ENCODE measurements at regions of chr11 and their contacts with region 1.

Region 1: DNA sequence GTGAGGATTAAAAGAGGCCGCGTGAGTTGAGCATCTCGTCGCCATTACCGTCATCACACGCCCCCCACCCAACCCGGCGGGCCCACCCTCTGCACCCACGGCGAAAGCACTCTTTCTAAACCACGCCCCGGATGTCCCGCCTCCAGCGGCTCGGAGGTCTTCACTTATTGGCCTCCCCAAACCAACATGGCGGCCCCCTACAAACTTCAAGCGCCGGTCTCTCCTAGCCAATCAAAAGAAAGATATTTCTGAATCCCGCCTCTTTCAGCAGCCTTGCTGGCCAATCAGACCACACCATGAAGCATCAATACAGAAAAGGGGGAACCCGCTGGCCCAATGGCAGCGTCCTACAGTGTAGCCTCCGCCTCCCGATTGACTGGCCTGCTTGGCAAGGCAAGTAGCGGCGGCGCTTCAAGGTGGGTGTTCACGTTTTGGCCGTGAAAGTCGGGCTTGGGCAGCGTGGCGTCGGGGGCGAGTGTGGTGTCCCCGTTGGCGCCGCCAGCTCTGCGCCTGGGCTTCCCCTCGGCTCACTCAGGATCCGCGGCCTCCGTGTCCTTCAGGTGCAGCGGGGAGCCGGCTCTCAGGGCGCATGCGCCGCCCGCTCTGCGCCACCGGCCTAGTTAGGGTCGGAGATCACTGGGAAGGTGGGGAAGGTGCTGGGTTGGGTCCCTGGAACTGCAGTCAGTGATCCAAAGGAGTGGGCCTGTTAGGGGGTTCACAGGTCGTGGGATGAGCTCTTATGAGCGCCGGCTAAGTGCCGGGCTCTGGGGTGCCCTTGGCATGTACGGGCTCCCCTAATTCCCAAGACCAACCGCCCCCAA is at the start of gene NDUFS8:
- DNase-seq: peak; percentile 99
- H3K4me3 Mint-ChIP-seq: peak within 1 kb of the TSS; percentile 84
- H3K27ac Mint-ChIP-seq: peak within 1 kb of the TSS; percentile 87
- H3K4me1 Mint-ChIP-seq: peaks cover 23% of the 10 kb centered on the region
- H3K27me3 Mint-ChIP-seq: no peaks in the 10 kb centered on the region
- total RNA-seq, gene NDUFS8: 153 and 159 TPM in 2 replicates

Region 2: DNA sequence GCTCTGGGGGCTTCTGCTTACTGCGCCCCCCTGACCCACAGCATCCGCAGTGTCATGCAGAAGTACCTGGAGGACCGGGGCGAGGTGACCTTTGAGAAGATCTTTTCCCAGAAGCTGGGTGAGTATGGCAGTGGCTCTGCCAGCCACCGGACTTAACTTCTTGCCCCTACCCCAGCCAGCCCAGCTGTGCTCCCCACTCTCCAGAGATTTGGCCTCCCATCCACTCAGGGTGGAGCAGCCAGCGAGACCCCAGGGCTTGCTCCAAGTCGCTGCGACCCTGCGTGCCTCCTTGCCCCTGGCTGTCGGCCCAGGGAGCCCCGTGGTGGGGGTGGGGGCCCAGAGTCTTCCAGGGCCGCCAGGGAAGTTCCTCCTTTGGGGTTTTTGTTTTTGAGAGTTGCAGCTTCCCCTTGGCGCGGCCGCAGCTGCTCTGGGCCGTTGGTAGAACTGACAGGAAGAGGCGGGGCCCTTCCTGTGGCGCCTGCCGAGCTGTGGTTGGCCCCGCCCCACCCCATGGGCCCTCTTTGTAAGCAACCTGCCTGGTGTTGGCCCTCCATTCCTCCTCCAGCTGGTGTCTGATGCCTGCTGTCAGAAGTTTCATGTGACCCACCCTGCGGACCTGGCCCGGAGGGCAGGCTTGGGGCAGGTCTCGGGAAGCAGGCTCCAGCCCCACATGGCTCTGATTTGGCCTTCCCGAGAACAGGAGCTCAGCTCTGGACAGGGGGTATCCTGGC is 753.1 kb before region 1 on chr11:
- intact Hi-C with region 1: loop called (anchors 10 kb)
- DNase-seq: peak; percentile 97
- H3K4me3 Mint-ChIP-seq: peak overlapping the region; percentile 81
- H3K27ac Mint-ChIP-seq: peak overlapping the region; percentile 99
- H3K4me1 Mint-ChIP-seq: peaks cover 52% of the 10 kb centered on the region
- H3K27me3 Mint-ChIP-seq: no peaks in the 10 kb centered on the region

Region 3: DNA sequence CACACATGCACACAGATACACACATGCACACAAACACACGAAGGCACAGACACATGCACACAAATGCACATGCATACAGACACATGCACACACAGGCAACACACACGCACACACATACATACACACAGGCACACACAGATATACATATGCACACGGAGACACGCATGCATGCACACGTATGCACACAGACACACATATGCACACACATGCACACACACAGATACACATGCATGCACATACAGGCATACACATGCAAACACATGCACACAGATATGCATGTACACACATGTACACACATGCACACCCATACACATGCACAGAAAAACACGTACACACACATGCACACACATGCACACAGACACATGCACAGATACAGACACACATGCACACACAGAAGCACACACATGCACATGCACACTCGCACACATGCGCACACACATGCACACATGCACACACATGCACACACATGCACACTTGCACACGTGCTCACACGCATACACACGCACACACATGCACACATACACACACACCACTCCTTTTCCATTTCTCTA is 285.3 kb before region 1 on chr11:
- intact Hi-C with region 1: no loop called
- DNase-seq: no peak
- H3K4me3 Mint-ChIP-seq: no peak overlapping the region
- H3K27ac Mint-ChIP-seq: no peak overlapping the region
- H3K4me1 Mint-ChIP-seq: no peaks in the 10 kb centered on the region
- H3K27me3 Mint-ChIP-seq: peaks cover 2% of the 10 kb centered on the region

Region 4: GRCh38 chr11:68003846-68004550 is 26.5 kb before region 1 on chr11 and contains the start of gene UNC93B1:
- intact Hi-C with region 1: loop called (anchors 1 kb)
- DNase-seq: peak; percentile 96
- H3K4me3 Mint-ChIP-seq: peak within 1 kb of the TSS; percentile 89
- H3K27ac Mint-ChIP-seq: peak within 1 kb of the TSS; percentile 87
- H3K4me1 Mint-ChIP-seq: peaks cover 19% of the 10 kb centered on the region
- H3K27me3 Mint-ChIP-seq: peaks cover 2% of the 10 kb centered on the region
- total RNA-seq, gene UNC93B1: 13.8 and 15.6 TPM in 2 replicates

Region 5: DNA sequence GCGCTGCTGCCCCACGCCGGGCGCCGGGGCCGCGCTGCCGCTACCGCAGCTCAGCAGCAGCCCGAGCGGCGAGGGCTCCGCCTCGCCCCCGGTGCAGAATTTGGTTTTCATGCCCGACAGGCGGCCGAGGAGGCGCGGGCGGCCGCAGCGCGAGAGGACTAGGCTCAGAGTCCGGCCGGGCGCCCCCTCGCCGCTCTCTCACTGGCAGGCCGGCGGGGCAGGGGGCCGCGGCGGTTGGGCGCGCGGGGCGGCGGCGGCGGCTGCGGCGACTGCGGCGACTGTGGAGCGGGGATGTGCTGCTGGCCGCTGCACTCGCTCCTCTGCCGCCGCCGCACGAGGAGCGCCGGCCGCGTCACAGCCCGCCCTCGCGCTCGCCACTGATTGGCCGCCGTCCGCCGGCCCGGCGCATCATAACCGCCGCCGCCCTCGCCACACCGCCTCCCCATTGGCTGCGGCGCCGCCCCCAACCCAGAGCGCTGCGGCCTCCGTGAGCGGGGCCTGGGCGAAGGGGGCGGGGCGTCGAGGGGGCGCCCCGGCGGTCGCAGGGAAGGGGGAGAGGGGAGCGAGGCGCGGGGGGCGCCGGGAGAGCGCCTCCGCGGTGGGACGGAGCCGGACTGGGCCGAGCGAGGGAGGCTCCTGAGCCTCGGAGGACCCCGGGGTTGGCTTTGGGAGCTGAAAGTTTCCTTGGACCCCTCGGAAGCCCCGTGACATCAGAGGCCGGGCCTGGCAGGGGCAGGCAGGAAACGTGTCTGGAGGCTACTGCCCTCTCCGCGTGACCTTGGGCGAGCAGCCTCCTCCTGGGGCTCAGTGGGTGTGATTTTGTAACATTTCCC is 90.8 kb after region 1 on chr11 and contains the start of gene CHKA:
- intact Hi-C with region 1: loop called (anchors 5 kb)
- DNase-seq: peak; percentile 97
- H3K4me3 Mint-ChIP-seq: peak within 1 kb of the TSS; percentile 87
- H3K27ac Mint-ChIP-seq: peak within 1 kb of the TSS; percentile 84
- H3K4me1 Mint-ChIP-seq: peaks cover 6% of the 10 kb centered on the region
- H3K27me3 Mint-ChIP-seq: peaks cover 12% of the 10 kb centered on the region
- total RNA-seq, gene CHKA: 15.1 TPM in 2 replicates

Region 6: GRCh38 chr11:68213555-68214174 is 183.1 kb after region 1 on chr11:
- intact Hi-C with region 1: loop called (anchors 10 kb)
- DNase-seq: peak; percentile 94
- H3K4me3 Mint-ChIP-seq: peak overlapping the region; percentile 75
- H3K27ac Mint-ChIP-seq: peak overlapping the region; percentile 71
- H3K4me1 Mint-ChIP-seq: peaks cover 34% of the 10 kb centered on the region
- H3K27me3 Mint-ChIP-seq: peaks cover 26% of the 10 kb centered on the region

Region 7: GRCh38 chr11:68235650-68236049 is 205.1 kb after region 1 on chr11:
- intact Hi-C with region 1: no loop called
- DNase-seq: no peak
- H3K4me3 Mint-ChIP-seq: no peak overlapping the region
- H3K27ac Mint-ChIP-seq: no peak overlapping the region
- H3K4me1 Mint-ChIP-seq: no peaks in the 10 kb centered on the region
- H3K27me3 Mint-ChIP-seq: peaks cover 22% of the 10 kb centered on the region

Measured in activated CD4-positive, alpha-beta T cell treated with anti-CD3 and anti-CD28 coated beads, Interleukin-2, amount 10 ng/mL, durations not matched to agents 24 days and 14 days (primary cell).